ENCODE measurements at regions of chr10 and their contacts with region 1.

Region 1: GRCh38 chr10:16843252-16843870 is 26.1 kb upstream of the RSU1 start:
- DNase-seq: peak; percentile 90
- H3K4me3 ChIP-seq: no peak overlapping the region
- H3K27ac ChIP-seq: no peak overlapping the region
- H3K4me1 ChIP-seq: no peaks in the 10 kb centered on the region
- H3K27me3 ChIP-seq: no peaks in the 10 kb centered on the region
- CTCF ChIP-seq: peak; percentile 71

Region 2: GRCh38 chr10:16341637-16342036 is 501.7 kb before region 1 on chr10:
- CTCF ChIA-PET with region 1: no interaction called
- POLR2A ChIA-PET with region 1: no interaction called
- intact Hi-C with region 1: no loop called
- DNase-seq: no peak
- H3K4me3 ChIP-seq: no peak overlapping the region
- H3K27ac ChIP-seq: no peak overlapping the region
- H3K4me1 ChIP-seq: no peaks in the 10 kb centered on the region
- H3K27me3 ChIP-seq: peaks cover 28% of the 10 kb centered on the region
- CTCF ChIP-seq: no peak

Region 3: DNA sequence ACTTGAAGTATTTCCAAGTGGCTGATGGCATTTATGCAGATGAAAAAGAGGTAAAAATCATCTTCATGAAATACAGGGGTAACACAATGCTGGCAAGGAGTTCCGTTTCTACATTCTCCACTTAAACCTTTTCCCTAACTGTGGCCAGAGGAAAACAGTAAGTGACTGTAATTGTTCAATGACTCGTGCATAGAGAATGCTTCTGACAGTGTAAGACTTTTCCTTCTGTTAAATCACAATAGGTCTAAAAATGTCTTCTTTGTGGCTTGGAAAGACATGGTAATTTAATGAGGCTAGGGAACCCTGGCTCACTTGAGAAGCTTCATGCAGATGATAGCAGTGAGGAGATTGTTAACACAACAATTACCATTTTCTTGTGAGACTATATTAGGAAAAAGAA is 24.2 kb after region 1 on chr10:
- CTCF ChIA-PET with region 1: interaction called, 10 read pairs
- POLR2A ChIA-PET with region 1: no interaction called
- intact Hi-C with region 1: no loop called
- DNase-seq: peak; percentile 50
- H3K4me3 ChIP-seq: no peak overlapping the region
- H3K27ac ChIP-seq: no peak overlapping the region
- H3K4me1 ChIP-seq: peaks cover 14% of the 10 kb centered on the region
- H3K27me3 ChIP-seq: no peaks in the 10 kb centered on the region
- CTCF ChIP-seq: no peak

Region 4: GRCh38 chr10:17257466-17258321 is 414.3 kb after region 1 on chr10:
- CTCF ChIA-PET with region 1: interaction called, 5 read pairs
- POLR2A ChIA-PET with region 1: no interaction called
- intact Hi-C with region 1: loop called (anchors 2 kb)
- DNase-seq: peak; percentile 86
- H3K4me3 ChIP-seq: no peak overlapping the region
- H3K27ac ChIP-seq: no peak overlapping the region
- H3K4me1 ChIP-seq: peaks cover 12% of the 10 kb centered on the region
- H3K27me3 ChIP-seq: no peaks in the 10 kb centered on the region
- CTCF ChIP-seq: peak; percentile 90

Region 5: GRCh38 chr10:17375936-17376584 is 532.7 kb after region 1 on chr10:
- CTCF ChIA-PET with region 1: interaction called, 3 read pairs
- POLR2A ChIA-PET with region 1: no interaction called
- intact Hi-C with region 1: loop called (anchors 2 kb)
- DNase-seq: peak; percentile 74
- H3K4me3 ChIP-seq: no peak overlapping the region
- H3K27ac ChIP-seq: no peak overlapping the region
- H3K4me1 ChIP-seq: no peaks in the 10 kb centered on the region
- H3K27me3 ChIP-seq: no peaks in the 10 kb centered on the region
- CTCF ChIP-seq: peak; percentile 94

Region 6: GRCh38 chr10:17430647-17431355 is 587.4 kb after region 1 on chr10:
- CTCF ChIA-PET with region 1: no interaction called
- POLR2A ChIA-PET with region 1: no interaction called
- intact Hi-C with region 1: loop called (anchors 2 kb)
- DNase-seq: peak; percentile 78
- H3K4me3 ChIP-seq: no peak overlapping the region
- H3K27ac ChIP-seq: no peak overlapping the region
- H3K4me1 ChIP-seq: no peaks in the 10 kb centered on the region
- H3K27me3 ChIP-seq: peaks cover 26% of the 10 kb centered on the region
- CTCF ChIP-seq: peak; percentile 91